CD4-positive, alpha-beta memory T cell (primary cell): ENCODE measurements at regions of chr1 and their contacts with region 1.

Region 1: GRCh38 chr1:112955781-112956543 is at the start of gene SLC16A1:
- DNase-seq: peak; percentile 85 to 89 (median 87)
- H3K4me3 ChIP-seq: peak within 1 kb of the TSS; percentile 59 to 96
- H3K4me3 Mint-ChIP-seq: peak within 1 kb of the TSS; percentile 76 to 99 (median 97)
- H3K27ac ChIP-seq: peak within 1 kb of the TSS; percentile 80
- H3K27ac Mint-ChIP-seq: peak within 1 kb of the TSS; percentile 68 to 98 (median 95)
- H3K4me1 ChIP-seq: peaks cover 34% of the 10 kb centered on the region
- H3K4me1 Mint-ChIP-seq: peaks cover 38 to 73% (median 52%) of the 10 kb centered on the region in 4 donors
- H3K27me3 ChIP-seq: no peaks in the 10 kb centered on the region
- H3K27me3 Mint-ChIP-seq: no peaks in the 10 kb centered on the region
- total RNA-seq, gene SLC16A1: 9.7 to 12.7 TPM

Region 2: GRCh38 chr1:112971006-112971405 is 15.0 kb after region 1 on chr1:
- CTCF ChIA-PET with region 1: interaction called, 4 read pairs
- POLR2A ChIA-PET with region 1: interaction called, 19 read pairs
- intact Hi-C with region 1: no loop called
- DNase-seq: no peak
- H3K4me3 ChIP-seq: no peak overlapping the region
- H3K4me3 Mint-ChIP-seq: no peak overlapping the region
- H3K27ac ChIP-seq: no peak overlapping the region
- H3K27ac Mint-ChIP-seq: no peak overlapping the region
- H3K4me1 ChIP-seq: no peaks in the 10 kb centered on the region
- H3K4me1 Mint-ChIP-seq: peaks cover 0 to 3% (median under 1%) of the 10 kb centered on the region in 4 donors
- H3K27me3 ChIP-seq: no peaks in the 10 kb centered on the region
- H3K27me3 Mint-ChIP-seq: no peaks in the 10 kb centered on the region